CD8-positive, alpha-beta T cell (primary cell): ENCODE measurements at regions of chr19 and their contacts with region 1.

Region 1: GRCh38 chr19:51644636-51645271 is 1.9 kb downstream of the SIGLEC14 start:
- DNase-seq: no peak
- ATAC-seq: no peak
- H3K4me3 ChIP-seq: no peak overlapping the region
- H3K4me3 Mint-ChIP-seq: no peak overlapping the region
- H3K27ac ChIP-seq: no peak overlapping the region
- H3K27ac Mint-ChIP-seq: no peak overlapping the region
- H3K4me1 ChIP-seq: no peaks in the 10 kb centered on the region
- H3K4me1 Mint-ChIP-seq: no peaks in the 10 kb centered on the region
- H3K27me3 ChIP-seq: no peaks in the 10 kb centered on the region
- H3K27me3 Mint-ChIP-seq: peaks cover 43% of the 10 kb centered on the region
- CTCF ChIP-seq: no peak

Region 2: GRCh38 chr19:51493776-51494175 is 151.0 kb before region 1 on chr19:
- CTCF ChIA-PET with region 1: no interaction called
- POLR2A ChIA-PET with region 1: no interaction called
- intact Hi-C with region 1: no loop called
- DNase-seq: no peak
- ATAC-seq: no peak
- H3K4me3 ChIP-seq: no peak overlapping the region
- H3K4me3 Mint-ChIP-seq: no peak overlapping the region
- H3K27ac ChIP-seq: no peak overlapping the region
- H3K27ac Mint-ChIP-seq: no peak overlapping the region
- H3K4me1 ChIP-seq: no peaks in the 10 kb centered on the region
- H3K4me1 Mint-ChIP-seq: no peaks in the 10 kb centered on the region
- H3K27me3 ChIP-seq: no peaks in the 10 kb centered on the region
- H3K27me3 Mint-ChIP-seq: peaks cover 22% of the 10 kb centered on the region
- CTCF ChIP-seq: no peak

Region 3: DNA sequence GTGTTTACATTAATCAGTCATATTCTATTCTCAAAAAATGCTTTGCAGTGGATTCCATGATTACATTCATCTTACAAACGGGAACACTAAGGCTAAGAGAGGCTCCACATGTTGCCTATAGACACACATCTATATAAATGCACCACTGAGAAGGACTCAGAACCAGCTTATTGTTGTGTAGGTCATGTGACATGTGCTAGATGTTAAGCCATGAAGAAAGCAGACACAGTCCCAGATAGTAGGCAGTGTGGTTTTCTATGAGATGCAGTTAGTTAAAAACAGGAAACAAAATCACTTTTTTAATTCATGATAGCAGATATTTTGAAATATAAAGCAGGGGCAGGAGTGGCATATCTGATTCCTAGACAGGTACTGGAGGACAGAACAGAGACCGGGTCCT is 124.0 kb before region 1 on chr19:
- CTCF ChIA-PET with region 1: no interaction called
- POLR2A ChIA-PET with region 1: no interaction called
- intact Hi-C with region 1: no loop called
- DNase-seq: no peak
- ATAC-seq: no peak
- H3K4me3 ChIP-seq: no peak overlapping the region
- H3K4me3 Mint-ChIP-seq: no peak overlapping the region
- H3K27ac ChIP-seq: no peak overlapping the region
- H3K27ac Mint-ChIP-seq: no peak overlapping the region
- H3K4me1 ChIP-seq: no peaks in the 10 kb centered on the region
- H3K4me1 Mint-ChIP-seq: no peaks in the 10 kb centered on the region
- H3K27me3 ChIP-seq: no peaks in the 10 kb centered on the region
- H3K27me3 Mint-ChIP-seq: peaks cover 25% of the 10 kb centered on the region
- CTCF ChIP-seq: no peak

Region 4: GRCh38 chr19:51531349-51532315 is 113.1 kb before region 1 on chr19 and contains the start of gene SIGLEC6:
- CTCF ChIA-PET with region 1: no interaction called
- POLR2A ChIA-PET with region 1: no interaction called
- intact Hi-C with region 1: loop called in 1 of 2 experiments (anchors 10 kb)
- DNase-seq: peak in 2 of 9 experiments; percentile 24 to 42
- ATAC-seq: no peak
- H3K4me3 ChIP-seq: no peak within 1 kb of the TSS
- H3K4me3 Mint-ChIP-seq: no peak within 1 kb of the TSS
- H3K27ac ChIP-seq: no peak within 1 kb of the TSS
- H3K27ac Mint-ChIP-seq: no peak within 1 kb of the TSS
- H3K4me1 ChIP-seq: no peaks in the 10 kb centered on the region
- H3K4me1 Mint-ChIP-seq: no peaks in the 10 kb centered on the region
- H3K27me3 ChIP-seq: no peaks in the 10 kb centered on the region
- H3K27me3 Mint-ChIP-seq: peaks cover 51% of the 10 kb centered on the region
- CTCF ChIP-seq: no peak
- total RNA-seq, gene SIGLEC6: not detected

Region 5: GRCh38 chr19:51664131-51664530 is 19.4 kb after region 1 on chr19:
- CTCF ChIA-PET with region 1: no interaction called
- POLR2A ChIA-PET with region 1: no interaction called
- intact Hi-C with region 1: no loop called
- DNase-seq: no peak
- ATAC-seq: no peak
- H3K4me3 ChIP-seq: no peak overlapping the region
- H3K4me3 Mint-ChIP-seq: no peak overlapping the region
- H3K27ac ChIP-seq: no peak overlapping the region
- H3K27ac Mint-ChIP-seq: no peak overlapping the region
- H3K4me1 ChIP-seq: no peaks in the 10 kb centered on the region
- H3K4me1 Mint-ChIP-seq: no peaks in the 10 kb centered on the region
- H3K27me3 ChIP-seq: peaks cover 0 to 7% of the 10 kb centered on the region in 2 experiments
- H3K27me3 Mint-ChIP-seq: peaks cover 43% of the 10 kb centered on the region
- CTCF ChIP-seq: no peak